ENCODE measurements at regions of chr15 and their contacts with region 1.

Region 1: GRCh38 chr15:50241684-50242450 is 23.7 kb downstream of the HDC start:
- DNase-seq: no peak
- H3K4me3 ChIP-seq: no peak overlapping the region
- H3K27me3 ChIP-seq: no peaks in the 10 kb centered on the region
- CTCF ChIP-seq: 0 out of 2 replicates have a peak, but pooled peaks have one; percentile 2

Region 2: GRCh38 chr15:50353251-50353974 is 111.5 kb after region 1 on chr15:
- CTCF ChIA-PET with region 1: no interaction called
- POLR2A ChIA-PET with region 1: interaction called, 13 read pairs
- DNase-seq: peak; percentile 85
- H3K4me3 ChIP-seq: peak overlapping the region; percentile 88
- H3K27me3 ChIP-seq: no peaks in the 10 kb centered on the region
- CTCF ChIP-seq: no peak

Region 3: DNA sequence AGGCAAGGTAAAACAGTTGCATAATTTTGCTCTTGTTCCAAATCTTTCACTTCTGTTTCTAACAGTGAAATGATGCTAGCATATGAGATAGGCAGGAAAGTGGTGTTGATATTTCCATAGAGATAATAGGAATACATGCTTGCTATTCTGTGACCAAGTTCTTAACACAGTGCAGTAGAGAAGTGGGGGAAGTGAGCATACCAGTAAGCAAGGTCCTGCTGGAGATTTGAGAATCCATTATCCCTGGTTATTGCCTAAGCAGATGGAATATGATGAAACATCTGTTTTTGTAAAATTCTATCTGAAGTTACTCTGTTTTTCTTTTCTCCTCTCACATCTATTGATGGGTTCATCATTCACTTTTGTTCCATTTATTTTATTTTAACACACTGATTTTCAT is 211.1 kb after region 1 on chr15:
- CTCF ChIA-PET with region 1: no interaction called
- POLR2A ChIA-PET with region 1: no interaction called
- DNase-seq: no peak
- H3K4me3 ChIP-seq: no peak overlapping the region
- H3K27me3 ChIP-seq: no peaks in the 10 kb centered on the region
- CTCF ChIP-seq: no peak

Measured in BJ (cell line).